WTC11 (cell line): ENCODE measurements at regions of chr4 and their contacts with region 1.

Region 1: DNA sequence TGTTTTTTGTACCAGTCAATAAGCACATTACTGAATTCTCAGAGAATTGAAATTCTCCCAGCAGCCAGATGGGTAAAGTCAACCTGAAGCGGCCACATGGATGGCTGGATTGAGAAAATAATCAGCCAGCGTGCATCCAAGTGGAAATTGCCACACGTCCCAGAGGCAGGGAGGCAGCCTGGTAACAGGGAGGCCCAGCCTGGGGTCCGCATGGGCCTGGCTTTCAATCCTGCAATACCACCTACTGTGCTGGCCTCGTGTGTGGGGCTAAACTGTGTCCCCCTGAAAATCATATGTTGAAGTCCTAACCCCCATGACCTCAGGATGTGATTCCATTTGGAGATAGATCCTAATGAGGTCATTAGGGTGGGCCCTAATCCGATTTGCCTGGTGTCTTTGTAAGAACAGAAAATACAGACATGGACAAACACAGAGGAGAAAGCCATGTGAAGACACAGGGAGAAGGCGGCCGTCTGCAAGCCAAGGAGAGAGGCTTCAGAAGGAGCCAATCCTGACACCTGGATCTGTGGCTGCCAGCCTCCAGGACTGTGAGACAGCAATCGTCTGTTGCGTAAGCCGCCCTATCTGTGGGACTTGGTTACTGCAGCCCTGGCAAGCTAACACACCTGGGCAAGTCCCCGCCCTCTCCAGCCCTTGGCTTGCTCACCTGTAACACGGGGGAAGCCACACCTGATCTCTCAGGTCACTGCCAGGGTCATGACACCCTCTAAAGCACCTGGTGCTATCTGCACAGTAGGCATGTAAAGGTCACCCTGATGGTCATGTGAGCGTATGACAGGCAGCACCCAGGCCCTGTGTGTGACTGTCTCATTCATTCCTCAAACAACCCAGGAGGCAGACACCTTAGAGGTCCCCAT is 90.3 kb downstream of the JAKMIP1 start:
- DNase-seq: peak; percentile 85
- ATAC-seq: peak; percentile 99
- H3K4me3 Mint-ChIP-seq: no peak overlapping the region
- H3K27ac Mint-ChIP-seq: no peak overlapping the region
- H3K4me1 Mint-ChIP-seq: peaks cover 20% of the 10 kb centered on the region
- H3K27me3 Mint-ChIP-seq: peaks cover 11% of the 10 kb centered on the region
- CTCF ChIP-seq: peak; percentile 65; the same call in 1 of the 2 replicates

Region 2: GRCh38 chr4:6035786-6036185 is 74.3 kb before region 1 on chr4:
- CTCF ChIA-PET with region 1: no interaction called
- POLR2A ChIA-PET with region 1: no interaction called
- DNase-seq: no peak
- ATAC-seq: 0 out of 2 replicates have a peak, but pooled peaks have one; percentile 18
- H3K4me3 Mint-ChIP-seq: no peak overlapping the region
- H3K27ac Mint-ChIP-seq: no peak overlapping the region
- H3K4me1 Mint-ChIP-seq: no peaks in the 10 kb centered on the region
- H3K27me3 Mint-ChIP-seq: no peaks in the 10 kb centered on the region
- CTCF ChIP-seq: no peak

Region 3: DNA sequence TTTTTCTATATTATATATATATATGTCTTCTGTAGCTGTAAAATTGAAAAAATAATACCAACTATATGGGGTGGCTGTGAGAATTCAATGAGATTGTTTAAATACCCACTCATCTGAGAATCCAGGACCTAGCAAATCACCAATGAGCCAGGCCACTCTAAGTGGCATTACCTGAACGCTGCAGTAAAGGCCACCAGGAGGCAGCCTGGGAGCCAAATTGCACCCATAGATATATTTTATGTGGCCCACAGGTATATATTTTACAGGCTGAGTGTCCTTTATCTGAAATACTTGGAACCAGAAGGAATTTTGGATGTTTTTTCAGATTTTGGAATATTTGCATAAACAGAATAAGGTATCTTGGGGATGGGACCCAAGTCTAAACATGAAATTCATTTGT is 33.7 kb before region 1 on chr4:
- CTCF ChIA-PET with region 1: interaction called, 11 read pairs
- POLR2A ChIA-PET with region 1: no interaction called
- DNase-seq: peak; percentile 43
- ATAC-seq: peak; percentile 62
- H3K4me3 Mint-ChIP-seq: no peak overlapping the region
- H3K27ac Mint-ChIP-seq: no peak overlapping the region
- H3K4me1 Mint-ChIP-seq: peaks cover 11% of the 10 kb centered on the region
- H3K27me3 Mint-ChIP-seq: no peaks in the 10 kb centered on the region
- CTCF ChIP-seq: peak; percentile 24; the same call in 1 of the 2 replicates

Region 4: DNA sequence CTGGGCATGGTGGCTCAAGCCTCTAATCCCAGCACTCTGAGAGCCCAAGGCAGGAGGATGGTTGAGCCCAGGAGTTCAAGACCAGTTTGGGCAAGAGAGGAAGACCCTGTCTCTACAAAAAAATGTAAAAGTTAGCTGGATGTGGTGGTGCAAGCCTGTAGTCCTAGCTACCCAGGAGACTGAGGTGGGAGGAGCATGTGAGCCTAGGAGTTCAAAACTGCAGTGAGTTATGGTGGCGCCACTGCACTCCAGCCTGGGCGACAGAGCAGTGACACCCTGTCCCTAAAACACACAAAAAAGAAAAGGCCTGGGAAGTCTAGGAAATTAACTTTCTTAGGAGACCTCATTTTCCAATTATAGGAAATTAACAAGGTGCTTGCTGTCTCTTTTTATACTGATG is 13.5 kb after region 1 on chr4:
- CTCF ChIA-PET with region 1: interaction called, 11 read pairs
- POLR2A ChIA-PET with region 1: no interaction called
- DNase-seq: no peak
- ATAC-seq: peak; percentile 65
- H3K4me3 Mint-ChIP-seq: no peak overlapping the region
- H3K27ac Mint-ChIP-seq: no peak overlapping the region
- H3K4me1 Mint-ChIP-seq: peaks cover 20% of the 10 kb centered on the region
- H3K27me3 Mint-ChIP-seq: no peaks in the 10 kb centered on the region; the same call in none of the 2 replicates
- CTCF ChIP-seq: no peak

Region 5: GRCh38 chr4:6162885-6163284 is 52.8 kb after region 1 on chr4:
- CTCF ChIA-PET with region 1: no interaction called
- POLR2A ChIA-PET with region 1: no interaction called
- DNase-seq: no peak
- ATAC-seq: no peak
- H3K4me3 Mint-ChIP-seq: no peak overlapping the region
- H3K27ac Mint-ChIP-seq: no peak overlapping the region
- H3K4me1 Mint-ChIP-seq: 0 out of 2 replicates have a peak, but pooled peaks cover 6% of the 10 kb centered on the region
- H3K27me3 Mint-ChIP-seq: peaks cover 5% of the 10 kb centered on the region
- CTCF ChIP-seq: no peak